Activated naive CD4-positive, alpha-beta T cell treated with anti-CD3 and anti-CD28 coated beads for 36 hours (primary cell): ENCODE measurements at regions of chr1 and their contacts with region 1.

Region 1: GRCh38 chr1:229480495-229480894 is 27.6 kb downstream of the NUP133 start:
- DNase-seq: no peak
- H3K4me3 Mint-ChIP-seq: no peak overlapping the region
- H3K27ac Mint-ChIP-seq: no peak overlapping the region
- H3K4me1 Mint-ChIP-seq: no peaks in the 10 kb centered on the region
- H3K27me3 Mint-ChIP-seq: no peaks in the 10 kb centered on the region

Region 2: DNA sequence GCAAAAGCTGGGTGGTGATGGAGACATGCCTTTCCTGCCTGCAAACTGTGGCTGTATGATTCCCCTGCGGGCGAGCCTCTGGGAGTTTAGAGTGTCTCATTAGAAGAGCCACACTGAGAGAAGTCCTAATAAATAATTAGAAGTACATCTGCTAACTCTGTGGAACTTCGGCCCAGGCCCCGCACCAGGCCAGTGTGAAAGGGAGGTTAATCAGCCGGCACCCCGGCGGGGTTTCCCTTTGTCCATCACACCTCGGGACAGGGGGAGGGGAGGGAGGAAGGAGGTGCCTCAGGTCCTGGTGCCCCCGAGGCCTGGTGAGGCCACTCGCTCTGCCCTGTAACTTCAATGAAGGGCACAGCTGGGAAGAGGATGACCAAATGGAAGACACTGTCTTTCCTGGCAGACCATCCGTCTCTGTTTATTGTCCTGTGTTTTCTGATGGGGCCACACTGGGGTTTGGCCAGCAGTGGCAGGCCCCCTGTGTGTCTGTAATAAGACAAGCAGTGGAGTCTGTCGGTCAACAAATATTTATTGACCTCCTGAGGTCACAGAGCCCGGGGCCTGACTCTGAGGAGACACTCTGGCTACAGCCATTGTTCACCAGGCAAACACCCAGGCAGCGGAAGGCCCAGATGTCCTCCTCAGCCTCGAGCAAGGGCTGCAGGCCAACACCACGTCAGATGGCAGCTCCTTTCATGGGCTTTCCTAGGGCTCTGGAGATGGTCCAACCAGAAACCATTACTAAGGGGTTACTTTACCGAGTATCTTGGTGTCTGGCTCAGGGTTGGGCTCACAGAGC is 477.1 kb before region 1 on chr1:
- CTCF ChIA-PET with region 1: no interaction called
- intact Hi-C with region 1: no loop called
- DNase-seq: no peak
- H3K4me3 Mint-ChIP-seq: no peak overlapping the region
- H3K27ac Mint-ChIP-seq: no peak overlapping the region
- H3K4me1 Mint-ChIP-seq: peaks cover 6% of the 10 kb centered on the region
- H3K27me3 Mint-ChIP-seq: no peaks in the 10 kb centered on the region

Region 3: GRCh38 chr1:229448845-229449244 is 31.6 kb before region 1 on chr1:
- CTCF ChIA-PET with region 1: interaction called, 11 read pairs
- intact Hi-C with region 1: no loop called
- DNase-seq: no peak
- H3K4me3 Mint-ChIP-seq: no peak overlapping the region
- H3K27ac Mint-ChIP-seq: no peak overlapping the region
- H3K4me1 Mint-ChIP-seq: no peaks in the 10 kb centered on the region
- H3K27me3 Mint-ChIP-seq: no peaks in the 10 kb centered on the region